ENCODE measurements at regions of chr6 and their contacts with region 1.

Region 1: DNA sequence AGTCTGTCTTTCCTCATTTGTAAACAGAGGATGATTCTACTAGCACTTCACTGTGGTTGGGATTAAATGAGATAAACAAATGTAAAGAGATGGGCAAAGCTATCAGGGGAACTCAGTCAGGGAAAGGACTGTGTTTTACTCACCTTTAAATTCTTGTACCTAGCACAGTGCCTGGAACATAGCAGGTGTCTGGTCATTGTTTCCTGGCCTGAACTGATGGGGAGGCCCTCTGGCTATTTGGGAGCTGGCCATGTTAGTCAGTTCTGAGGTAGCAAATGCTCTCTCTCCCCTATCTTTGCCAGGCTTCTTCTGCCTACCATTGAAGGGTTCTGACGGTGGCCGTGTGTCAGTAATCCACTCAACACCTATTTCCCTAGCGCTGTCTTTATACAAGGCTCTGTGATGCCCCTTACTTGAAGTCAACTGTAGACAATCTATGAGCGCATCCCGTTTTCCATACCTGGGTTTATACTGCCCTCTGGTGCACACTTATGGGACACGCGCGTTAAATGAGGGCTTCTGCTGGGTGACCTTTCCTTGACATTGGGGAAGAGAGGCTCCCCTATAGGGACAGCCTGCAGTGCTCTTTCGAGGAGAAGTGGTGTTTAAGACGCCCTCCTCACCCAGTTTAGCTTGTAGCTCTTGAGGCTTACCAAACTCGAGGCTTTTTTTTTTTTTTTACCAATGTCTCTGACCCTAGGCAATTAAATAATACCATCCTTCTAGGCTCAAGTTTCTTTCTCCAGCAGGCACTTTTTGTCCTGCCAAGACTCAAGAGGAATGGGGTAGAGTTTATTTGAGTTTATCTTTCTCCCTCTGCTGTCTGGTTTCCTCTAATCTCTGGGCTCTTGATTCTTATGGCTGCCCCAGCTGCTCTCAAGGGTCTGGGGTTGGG is 4.0 kb upstream of the SPATS1 start:
- DNase-seq: peak in 4 of 5 donors; percentile 44 to 58 (median 46)
- ATAC-seq: peak; percentile 57 to 83 (median 78)
- H3K4me3 ChIP-seq: no peak overlapping the region
- H3K27ac ChIP-seq: peak overlapping the region in 1 of 12 donors; percentile 42
- H3K4me1 ChIP-seq: peaks cover 0 to 12% (median 5%) of the 10 kb centered on the region in 12 donors
- H3K27me3 ChIP-seq: peaks cover 0 to 7% (median 0%) of the 10 kb centered on the region in 9 donors
- CTCF ChIP-seq: peak; percentile 51 to 79 (median 61)
- POLR2A ChIP-seq: no peak

Region 2: DNA sequence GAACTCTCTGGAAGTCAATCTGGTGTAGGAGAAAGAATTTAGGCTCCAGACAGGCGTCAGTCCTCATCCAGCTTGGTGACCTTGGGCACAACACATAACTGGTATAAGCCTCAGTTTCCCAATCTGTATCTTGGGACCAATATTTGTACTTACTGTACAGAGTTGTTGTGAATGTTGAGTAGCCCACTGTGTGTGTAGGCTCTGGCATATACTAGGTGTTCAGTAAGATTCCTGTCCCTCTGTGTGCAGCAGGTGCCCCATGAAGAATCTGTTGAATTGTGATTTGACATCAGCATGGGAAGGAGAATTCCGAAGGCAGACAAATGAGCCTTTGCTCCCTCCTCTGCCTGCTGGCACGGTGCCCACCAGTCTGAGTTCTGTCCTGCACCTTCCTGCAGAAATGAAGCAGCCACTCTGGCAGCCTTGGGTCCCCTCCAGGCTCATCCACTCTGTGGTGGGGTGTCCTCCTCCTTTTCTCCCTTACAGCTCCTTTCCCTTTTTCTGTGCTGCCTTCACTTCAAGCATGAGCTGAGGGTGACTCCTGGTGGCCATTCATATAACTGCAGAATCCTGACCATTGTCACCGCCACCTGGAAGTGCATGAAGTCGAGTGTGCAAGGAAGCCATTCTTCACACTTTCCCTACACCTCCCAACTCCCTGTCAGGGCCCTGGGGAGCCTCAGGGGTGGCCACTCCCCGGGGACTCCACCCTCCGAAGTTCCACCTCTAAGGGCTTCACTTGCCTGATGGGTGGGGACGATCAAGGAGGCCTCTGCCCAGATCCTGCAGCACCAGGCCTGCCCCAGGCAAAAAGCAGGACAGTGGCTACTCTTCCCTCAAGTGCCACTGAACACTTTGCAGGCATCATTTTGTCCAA is 259.4 kb before region 1 on chr6:
- intact Hi-C with region 1: no loop called
- DNase-seq: peak in 4 of 5 donors; percentile 60 to 72 (median 64)
- ATAC-seq: peak; percentile 27 to 47 (median 34)
- H3K4me3 ChIP-seq: no peak overlapping the region
- H3K27ac ChIP-seq: no peak overlapping the region
- H3K4me1 ChIP-seq: peaks cover 7 to 53% (median 29%) of the 10 kb centered on the region in 12 donors
- H3K27me3 ChIP-seq: peaks cover 0 to 10% (median 0%) of the 10 kb centered on the region in 9 donors
- CTCF ChIP-seq: peak; percentile 79 to 95 (median 92)
- POLR2A ChIP-seq: no peak

Region 3: DNA sequence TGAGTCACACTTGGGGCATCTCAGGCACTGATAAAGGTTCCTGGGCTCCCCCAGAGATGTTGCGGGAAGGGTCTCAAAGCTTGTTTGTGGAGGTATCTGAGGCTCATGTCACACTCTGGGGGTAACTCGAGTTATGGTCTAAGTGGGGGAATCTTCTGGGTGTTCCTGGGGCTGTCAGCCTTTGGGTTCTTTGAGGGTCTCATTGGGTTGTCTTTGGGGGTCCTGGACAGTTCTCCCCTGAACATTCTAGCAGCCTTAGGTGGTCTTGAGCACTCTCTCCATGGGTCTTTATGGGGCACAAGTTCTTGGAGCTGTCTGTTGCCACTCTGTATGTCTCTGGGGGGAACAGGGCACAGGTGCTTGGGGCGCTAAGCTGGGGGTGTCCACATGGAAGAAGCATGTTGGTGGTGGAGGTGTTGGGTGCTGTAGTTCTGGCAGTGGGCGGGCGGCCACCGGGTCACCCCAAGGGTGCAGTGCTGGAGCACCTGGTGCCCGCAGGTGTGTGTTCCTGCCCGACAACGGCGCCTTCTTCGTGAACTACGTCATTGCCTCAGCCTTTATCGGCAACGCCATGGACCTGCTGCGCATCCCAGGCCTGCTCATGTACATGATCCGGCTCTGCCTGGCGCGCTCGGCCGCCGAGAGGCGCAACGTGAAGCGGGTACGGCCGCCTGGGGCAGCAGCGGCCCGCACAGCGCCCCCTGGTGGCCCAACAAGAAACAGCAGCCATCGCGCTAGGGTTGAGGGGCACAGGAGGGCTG is 186.9 kb before region 1 on chr6:
- intact Hi-C with region 1: loop called in 3 of 10 experiments (anchors 5 to 10 kb)
- DNase-seq: peak; percentile 61 to 89 (median 75)
- ATAC-seq: peak; percentile 30 to 80 (median 72)
- H3K4me3 ChIP-seq: no peak overlapping the region
- H3K27ac ChIP-seq: no peak overlapping the region
- H3K4me1 ChIP-seq: peaks cover 0 to 18% (median 6%) of the 10 kb centered on the region in 12 donors
- H3K27me3 ChIP-seq: no peaks in the 10 kb centered on the region
- CTCF ChIP-seq: peak; percentile 96 to 100 (median 99)
- POLR2A ChIP-seq: no peak

Region 4: DNA sequence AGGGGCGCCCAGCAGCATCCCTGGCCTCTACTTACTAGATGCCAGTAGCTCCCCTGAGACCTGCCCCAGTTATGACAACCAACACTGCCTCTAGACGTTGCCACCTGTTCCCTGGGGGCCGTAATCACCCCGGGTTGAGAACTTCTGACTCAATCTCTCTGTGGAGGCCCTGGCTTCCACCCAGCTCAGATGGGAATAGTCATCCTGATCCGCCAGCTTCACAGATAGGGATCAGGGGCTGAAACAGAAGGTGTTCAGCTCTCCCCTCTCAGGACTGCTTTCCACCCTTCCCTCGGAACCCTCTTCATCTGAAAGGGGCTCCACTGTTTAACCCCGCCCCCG is 176.5 kb before region 1 on chr6:
- intact Hi-C with region 1: loop called in 2 of 10 experiments (anchors 10 kb)
- DNase-seq: no peak
- ATAC-seq: no peak
- H3K4me3 ChIP-seq: no peak overlapping the region
- H3K27ac ChIP-seq: no peak overlapping the region
- H3K4me1 ChIP-seq: no peaks in the 10 kb centered on the region
- H3K27me3 ChIP-seq: peaks cover 0 to 8% (median 0%) of the 10 kb centered on the region in 9 donors
- CTCF ChIP-seq: no peak
- POLR2A ChIP-seq: no peak

Region 5: GRCh38 chr6:44223319-44224028 is 115.0 kb before region 1 on chr6 and contains the start of gene SLC29A1:
- intact Hi-C with region 1: no loop called
- DNase-seq: peak; percentile 81 to 91 (median 87)
- ATAC-seq: peak in 3 of 4 donors; percentile 4 to 50 (median 40)
- H3K4me3 ChIP-seq: peak within 1 kb of the TSS; percentile 39 to 88 (median 72)
- H3K27ac ChIP-seq: peak within 1 kb of the TSS; percentile 54 to 99 (median 92)
- H3K4me1 ChIP-seq: peaks cover 9 to 95% (median 82%) of the 10 kb centered on the region in 12 donors
- H3K27me3 ChIP-seq: no peaks in the 10 kb centered on the region
- CTCF ChIP-seq: peak in 7 of 12 donors; percentile 5 to 35 (median 14)
- POLR2A ChIP-seq: peak in 1 of 2 donors; percentile 45
- total RNA-seq, gene SLC29A1: 94.9 to 319 (median 136) TPM

Region 6: DNA sequence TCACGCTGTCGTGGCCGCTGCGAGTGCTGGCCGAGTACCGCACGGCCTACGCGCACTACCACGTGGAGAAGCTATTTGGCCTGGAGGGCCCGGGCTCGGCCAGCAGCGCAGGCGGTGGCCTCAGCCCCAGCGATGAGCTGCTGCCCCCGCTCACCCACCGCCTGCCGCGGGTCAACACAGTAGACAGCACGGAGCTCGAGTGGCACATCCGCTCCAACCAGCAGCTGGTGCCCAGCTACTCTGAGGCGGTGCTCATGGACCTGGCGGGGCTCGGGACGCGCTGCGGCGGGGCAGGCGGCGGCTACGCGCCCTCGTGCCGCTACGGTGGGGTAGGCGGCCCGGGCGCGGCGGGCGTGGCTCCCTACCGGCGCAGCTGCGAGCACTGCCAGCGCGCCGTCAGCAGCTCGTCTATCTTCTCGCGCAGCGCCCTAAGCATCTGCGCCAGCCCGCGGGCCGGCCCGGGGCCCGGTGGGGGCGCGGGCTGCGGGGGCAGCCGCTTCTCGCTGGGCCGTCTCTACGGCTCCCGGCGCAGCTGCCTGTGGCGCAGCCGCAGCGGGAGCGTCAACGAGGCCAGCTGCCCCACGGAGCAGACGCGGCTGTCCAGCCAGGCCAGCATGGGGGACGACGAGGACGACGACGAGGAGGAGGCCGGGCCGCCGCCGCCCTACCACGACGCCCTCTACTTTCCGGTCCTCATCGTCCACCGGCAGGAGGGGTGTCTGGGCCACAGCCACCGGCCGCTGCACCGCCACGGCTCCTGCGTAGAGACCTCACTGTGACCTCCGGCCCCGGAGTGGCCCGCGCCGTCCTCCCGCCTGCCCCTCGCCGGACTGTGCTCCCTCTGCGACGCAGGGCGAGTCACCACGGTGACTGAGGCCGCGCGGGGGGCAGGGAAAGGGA is 62.5 kb before region 1 on chr6:
- intact Hi-C with region 1: no loop called
- DNase-seq: peak in 1 of 5 donors; percentile 61
- ATAC-seq: peak in 3 of 4 donors; percentile 10 to 65 (median 43)
- H3K4me3 ChIP-seq: peak overlapping the region in 11 of 12 donors; percentile 5 to 46 (median 39)
- H3K27ac ChIP-seq: no peak overlapping the region
- H3K4me1 ChIP-seq: peaks cover 0 to 15% (median 5%) of the 10 kb centered on the region in 12 donors
- H3K27me3 ChIP-seq: peaks cover 15 to 74% (median 33%) of the 10 kb centered on the region in 9 donors
- CTCF ChIP-seq: no peak
- POLR2A ChIP-seq: no peak

Region 7: DNA sequence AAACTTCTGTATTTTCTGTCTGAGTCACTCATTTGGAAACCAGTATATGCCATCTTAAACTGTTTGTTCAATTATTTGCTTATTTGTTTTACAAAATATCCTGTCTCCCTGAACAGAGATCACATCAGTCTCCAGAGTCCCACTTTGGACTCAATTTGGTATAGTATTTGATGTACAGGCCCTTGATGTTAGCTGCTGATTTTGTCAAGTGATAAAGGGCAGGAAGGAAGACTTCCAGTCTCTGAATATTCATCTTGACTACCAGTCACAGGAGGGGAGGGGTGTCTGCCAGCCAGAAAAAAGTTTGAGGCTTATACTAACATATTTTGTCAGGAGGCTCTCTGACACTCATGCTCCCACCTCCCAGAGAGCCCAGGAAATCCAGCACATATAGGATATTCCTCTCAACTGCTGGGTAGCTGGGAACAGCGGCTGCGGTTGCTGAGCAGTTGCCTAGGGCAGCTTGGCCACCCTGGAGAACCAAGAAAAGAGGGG is 612.8 kb after region 1 on chr6:
- intact Hi-C with region 1: no loop called
- DNase-seq: no peak
- ATAC-seq: no peak
- H3K4me3 ChIP-seq: no peak overlapping the region
- H3K27ac ChIP-seq: no peak overlapping the region
- H3K4me1 ChIP-seq: no peaks in the 10 kb centered on the region
- H3K27me3 ChIP-seq: no peaks in the 10 kb centered on the region
- CTCF ChIP-seq: no peak
- POLR2A ChIP-seq: no peak